Sigmoid colon (tissue), 7 donors: ENCODE measurements at regions of chr9 and their contacts with region 1.

Region 1: DNA sequence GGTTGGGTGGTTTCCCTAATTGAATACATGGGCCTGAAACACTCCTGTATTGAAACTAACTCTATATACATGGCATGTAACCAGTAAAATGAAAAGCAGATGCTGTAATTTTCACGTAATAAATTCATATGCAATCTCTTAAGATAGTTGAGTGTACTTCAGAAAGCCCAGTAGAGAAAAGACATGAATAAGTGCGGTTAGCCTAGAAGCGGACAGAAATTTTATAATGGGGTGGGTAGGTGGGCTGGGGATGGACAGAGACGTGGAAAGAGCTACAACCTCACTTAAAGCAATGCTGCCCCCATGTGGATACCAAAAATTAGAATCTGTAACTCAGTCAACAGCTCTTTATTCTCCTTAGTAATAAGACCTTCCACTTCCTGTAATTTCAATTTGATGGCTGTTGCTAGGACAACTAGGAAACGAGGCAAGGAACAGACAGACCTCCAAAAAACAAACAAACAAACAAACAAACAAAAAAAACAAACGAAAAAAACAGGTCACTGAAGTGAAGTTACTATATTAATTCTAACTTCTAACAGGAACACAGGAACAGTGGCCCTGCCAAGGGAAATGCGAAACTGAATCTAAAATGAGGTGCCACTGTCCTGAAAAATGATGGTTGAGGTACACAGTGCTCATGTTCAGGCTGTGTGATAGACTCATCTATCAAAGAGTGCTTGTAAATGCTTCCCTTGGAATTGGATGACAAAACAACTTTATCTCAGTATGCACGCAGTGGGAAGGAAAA is 103.4 kb upstream of the GNA14 start:
- DNase-seq: no peak
- H3K4me3 ChIP-seq: peak overlapping the region in 1 of 4 donors; percentile 5
- H3K27ac ChIP-seq: peak overlapping the region; percentile 15 to 68 (median 64)
- H3K4me1 ChIP-seq: peaks cover 0 to 55% (median 45%) of the 10 kb centered on the region in 4 donors
- H3K27me3 ChIP-seq: no peaks in the 10 kb centered on the region
- CTCF ChIP-seq: peak; percentile 42 to 59 (median 48)
- EP300 ChIP-seq: no peak
- POLR2A ChIP-seq: no peak

Region 2: GRCh38 chr9:77456829-77457437 is 294.6 kb before region 1 on chr9:
- intact Hi-C with region 1: loop called (anchors 2 kb)
- DNase-seq: peak; percentile 92
- H3K4me3 ChIP-seq: no peak overlapping the region
- H3K27ac ChIP-seq: peak overlapping the region in 1 of 4 donors; percentile 49
- H3K4me1 ChIP-seq: peaks cover 0 to 16% (median 11%) of the 10 kb centered on the region in 4 donors
- H3K27me3 ChIP-seq: no peaks in the 10 kb centered on the region
- CTCF ChIP-seq: peak; percentile 55 to 91 (median 81)
- EP300 ChIP-seq: no peak
- POLR2A ChIP-seq: no peak